Mammary epithelial cell (primary cell): ENCODE measurements at regions of chr15 and their contacts with region 1.

Region 1: GRCh38 chr15:27278761-27279160 is 307.8 kb downstream of the GABRG3 start:
- DNase-seq: no peak
- H3K4me3 ChIP-seq: no peak overlapping the region
- H3K27ac ChIP-seq: no peak overlapping the region
- H3K4me1 ChIP-seq: no peaks in the 10 kb centered on the region
- H3K27me3 ChIP-seq: no peaks in the 10 kb centered on the region
- CTCF ChIP-seq: no peak

Region 2: GRCh38 chr15:27234593-27234992 is 44.2 kb before region 1 on chr15:
- CTCF ChIA-PET with region 1: no interaction called
- dilution Hi-C with region 1: no loop called
- in situ Hi-C with region 1: no loop called
- intact Hi-C with region 1: no loop called
- DNase-seq: no peak
- H3K4me3 ChIP-seq: no peak overlapping the region
- H3K27ac ChIP-seq: no peak overlapping the region
- H3K4me1 ChIP-seq: no peaks in the 10 kb centered on the region
- H3K27me3 ChIP-seq: no peaks in the 10 kb centered on the region
- CTCF ChIP-seq: no peak

Region 3: DNA sequence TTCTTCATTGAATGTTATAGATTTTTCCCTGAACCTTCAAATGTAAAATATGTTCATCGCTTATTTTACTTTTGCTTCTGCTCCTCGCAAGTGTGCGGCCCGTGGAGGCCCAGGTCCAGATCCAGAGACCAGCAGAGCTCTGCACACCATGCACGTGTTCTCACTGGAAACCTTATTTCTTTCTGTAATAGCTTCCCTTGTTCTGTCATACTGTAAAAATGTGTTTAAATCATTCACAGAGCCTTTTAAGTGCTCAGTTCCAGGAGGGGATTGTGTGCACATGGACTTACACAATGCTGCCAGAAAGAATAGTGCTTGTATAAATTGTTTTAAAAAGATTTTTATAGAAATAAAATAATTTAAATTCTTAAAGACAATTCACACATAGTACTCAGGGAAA is 51.6 kb after region 1 on chr15:
- CTCF ChIA-PET with region 1: no interaction called
- dilution Hi-C with region 1: no loop called
- in situ Hi-C with region 1: loop called in 1 of 2 experiments (anchors 5 kb)
- intact Hi-C with region 1: no loop called
- DNase-seq: no peak
- H3K4me3 ChIP-seq: no peak overlapping the region
- H3K27ac ChIP-seq: no peak overlapping the region
- H3K4me1 ChIP-seq: no peaks in the 10 kb centered on the region
- H3K27me3 ChIP-seq: no peaks in the 10 kb centered on the region
- CTCF ChIP-seq: no peak